Activated T-helper 2 cell treated with anti-CD3 and anti-CD28 coated beads, Interferon-gamma antibody, Interleukin-2, Interleukin-4, amounts not matched to agents 10 μg/mL and 5 μg/mL and 100 μg/mL, durations not matched to agents 14 hours and 24 hours and 36 hours (primary cell): ENCODE measurements at regions of chr14 and their contacts with region 1.

Region 1: DNA sequence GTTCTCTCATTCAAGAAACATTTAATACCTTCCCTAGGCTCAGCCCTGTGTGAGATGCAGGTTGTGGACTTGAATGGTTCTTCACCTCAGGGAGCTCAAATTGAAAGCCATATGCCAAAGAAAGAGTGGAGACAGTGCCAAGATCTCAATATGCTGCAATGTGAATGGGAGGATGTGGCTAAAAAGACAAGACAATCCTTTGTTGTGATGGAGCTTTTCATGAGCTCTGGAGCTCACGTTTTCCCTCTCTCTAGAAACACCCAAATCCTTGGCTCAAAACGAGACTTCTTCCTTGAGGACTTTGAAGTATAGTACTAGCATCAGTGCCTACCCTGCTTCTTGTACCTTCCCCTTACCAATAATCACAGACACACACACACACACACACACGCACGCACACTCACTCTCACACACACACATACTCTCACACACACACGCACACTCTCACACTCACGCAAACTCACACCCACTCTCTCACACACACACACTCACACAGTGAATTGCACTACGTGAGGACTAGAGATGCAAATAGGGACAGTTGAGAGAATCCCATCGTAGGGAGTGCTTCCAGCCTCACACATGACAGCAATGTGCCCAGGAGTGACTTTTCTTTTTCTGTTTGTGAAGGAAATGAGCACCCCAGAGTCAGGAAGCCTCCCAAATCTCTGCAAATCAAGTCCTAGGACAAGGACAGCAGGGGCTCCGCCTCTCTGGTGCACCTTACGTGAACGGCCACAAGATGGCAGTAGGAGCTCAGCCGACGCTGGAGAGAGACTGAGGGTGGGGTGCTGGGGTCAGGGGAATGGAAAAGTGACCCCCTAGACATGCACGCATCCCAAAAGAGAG is 231.4 kb downstream of the PCNX1 start:
- DNase-seq: peak; percentile 48
- H3K4me3 Mint-ChIP-seq: no peak overlapping the region
- H3K27ac Mint-ChIP-seq: no peak overlapping the region
- H3K4me1 Mint-ChIP-seq: peaks cover 48% of the 10 kb centered on the region
- H3K27me3 Mint-ChIP-seq: no peaks in the 10 kb centered on the region

Region 2: GRCh38 chr14:71031000-71031399 is 107.7 kb before region 1 on chr14:
- intact Hi-C with region 1: no loop called
- DNase-seq: no peak
- H3K4me3 Mint-ChIP-seq: no peak overlapping the region
- H3K27ac Mint-ChIP-seq: no peak overlapping the region
- H3K4me1 Mint-ChIP-seq: no peaks in the 10 kb centered on the region
- H3K27me3 Mint-ChIP-seq: no peaks in the 10 kb centered on the region

Region 3: DNA sequence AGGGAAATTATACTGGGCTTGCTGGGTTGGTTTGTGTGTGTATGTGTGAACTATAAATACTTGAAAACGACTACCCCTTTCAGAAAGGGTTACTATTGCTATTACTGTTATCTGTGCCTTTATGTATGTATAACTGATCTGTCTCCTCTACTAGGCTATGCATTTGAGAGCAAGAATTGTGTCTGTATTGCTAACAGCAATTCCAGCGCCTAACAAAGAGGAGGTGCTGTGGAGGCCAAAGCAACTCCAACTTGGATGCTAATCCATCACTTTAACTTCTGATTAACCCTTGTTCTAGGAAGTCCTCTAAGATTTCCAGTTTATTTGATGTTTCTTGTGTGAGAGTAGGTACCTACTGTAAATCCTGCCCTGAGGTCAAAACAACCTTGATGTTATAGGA is 82.4 kb after region 1 on chr14:
- intact Hi-C with region 1: loop called (anchors 1 kb)
- DNase-seq: no peak
- H3K4me3 Mint-ChIP-seq: no peak overlapping the region
- H3K27ac Mint-ChIP-seq: no peak overlapping the region
- H3K4me1 Mint-ChIP-seq: peaks cover 24% of the 10 kb centered on the region
- H3K27me3 Mint-ChIP-seq: no peaks in the 10 kb centered on the region

Region 4: DNA sequence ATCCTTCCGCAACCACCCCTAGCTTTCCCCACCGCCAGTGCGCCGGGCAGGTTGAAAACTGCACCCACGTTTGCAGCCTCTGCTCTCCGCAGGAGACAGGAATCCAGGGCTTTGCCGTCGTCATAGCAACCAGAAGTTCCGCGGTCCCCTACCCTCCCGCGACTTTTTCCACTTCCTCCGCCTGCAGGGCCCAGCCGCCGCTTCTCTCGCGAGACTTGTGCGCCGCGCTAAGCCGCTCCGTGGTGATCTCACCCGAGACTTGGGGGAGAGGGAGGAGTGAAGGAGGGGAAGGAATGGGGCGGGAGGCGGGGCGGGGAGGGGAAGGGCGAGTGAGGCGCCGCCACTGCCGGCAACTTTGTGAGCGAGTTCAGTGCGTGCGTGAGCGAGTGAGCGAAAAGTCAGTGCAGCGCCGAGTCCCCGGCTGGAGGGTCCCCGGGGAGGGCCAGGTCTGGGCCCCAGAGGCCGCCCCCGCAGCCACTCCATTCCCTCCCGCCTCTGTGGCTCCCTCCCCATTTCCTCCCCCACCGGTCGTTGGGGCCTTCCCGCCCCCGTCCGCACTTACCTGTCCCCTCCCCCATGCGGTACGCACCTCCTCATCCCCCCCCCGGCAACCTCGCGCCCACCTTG is 181.5 kb after region 1 on chr14:
- intact Hi-C with region 1: loop called (anchors 1 kb)
- DNase-seq: peak; percentile 99
- H3K4me3 Mint-ChIP-seq: peak within 1 kb of the TSS; percentile 92
- H3K27ac Mint-ChIP-seq: peak within 1 kb of the TSS; percentile 91
- H3K4me1 Mint-ChIP-seq: peaks cover 42% of the 10 kb centered on the region
- H3K27me3 Mint-ChIP-seq: no peaks in the 10 kb centered on the region

Region 5: DNA sequence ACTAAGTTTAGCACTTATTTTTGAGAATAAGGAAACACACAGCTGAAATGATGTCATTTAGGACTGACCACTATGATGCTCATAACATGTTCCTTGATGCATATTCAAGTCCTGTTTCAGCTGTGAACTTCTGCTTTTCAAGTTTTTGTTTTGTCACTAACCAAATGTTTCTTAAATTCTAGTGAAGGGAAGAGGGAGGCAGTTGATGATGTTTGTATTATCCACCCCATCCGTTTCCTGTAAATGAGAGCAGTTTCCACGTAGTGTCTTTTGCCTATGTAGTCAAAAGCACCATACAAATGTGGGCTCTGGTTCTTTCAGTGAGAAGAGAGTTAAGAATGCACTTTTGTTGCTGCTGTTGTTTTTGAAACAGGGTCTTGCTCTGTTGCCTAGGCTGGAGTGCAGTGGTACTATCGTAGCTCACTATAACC is 260.4 kb after region 1 on chr14:
- intact Hi-C with region 1: loop called (anchors 1 kb)
- DNase-seq: no peak
- H3K4me3 Mint-ChIP-seq: peak overlapping the region; percentile 37
- H3K27ac Mint-ChIP-seq: peak overlapping the region; percentile 92
- H3K4me1 Mint-ChIP-seq: peaks cover 54% of the 10 kb centered on the region
- H3K27me3 Mint-ChIP-seq: no peaks in the 10 kb centered on the region

Region 6: GRCh38 chr14:71478542-71478941 is 339.9 kb after region 1 on chr14:
- intact Hi-C with region 1: loop called (anchors 5 kb)
- DNase-seq: no peak
- H3K4me3 Mint-ChIP-seq: no peak overlapping the region
- H3K27ac Mint-ChIP-seq: peak overlapping the region; percentile 14
- H3K4me1 Mint-ChIP-seq: peaks cover 48% of the 10 kb centered on the region
- H3K27me3 Mint-ChIP-seq: no peaks in the 10 kb centered on the region

Region 7: DNA sequence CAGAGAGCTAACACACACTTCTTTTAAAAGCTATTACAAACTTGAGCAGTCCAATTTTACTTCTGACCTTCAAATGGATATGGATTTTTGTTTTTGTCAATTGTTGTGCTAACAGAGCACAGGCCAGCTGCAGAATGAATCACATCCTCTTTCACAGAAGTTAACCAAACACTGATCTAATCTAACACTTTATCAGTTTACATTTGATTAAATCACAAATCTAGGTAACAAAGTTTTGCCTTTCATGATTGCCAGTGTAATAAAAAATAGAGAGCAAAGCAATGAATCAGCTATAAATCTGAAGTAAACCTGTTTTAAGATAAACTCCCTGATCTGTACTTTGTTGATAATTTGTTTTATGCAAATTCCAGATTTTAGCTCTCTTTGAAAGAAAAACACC is 520.5 kb after region 1 on chr14:
- intact Hi-C with region 1: loop called (anchors 1 kb)
- DNase-seq: no peak
- H3K4me3 Mint-ChIP-seq: no peak overlapping the region
- H3K27ac Mint-ChIP-seq: peak overlapping the region; percentile 9
- H3K4me1 Mint-ChIP-seq: peaks cover 33% of the 10 kb centered on the region
- H3K27me3 Mint-ChIP-seq: no peaks in the 10 kb centered on the region

Region 8: DNA sequence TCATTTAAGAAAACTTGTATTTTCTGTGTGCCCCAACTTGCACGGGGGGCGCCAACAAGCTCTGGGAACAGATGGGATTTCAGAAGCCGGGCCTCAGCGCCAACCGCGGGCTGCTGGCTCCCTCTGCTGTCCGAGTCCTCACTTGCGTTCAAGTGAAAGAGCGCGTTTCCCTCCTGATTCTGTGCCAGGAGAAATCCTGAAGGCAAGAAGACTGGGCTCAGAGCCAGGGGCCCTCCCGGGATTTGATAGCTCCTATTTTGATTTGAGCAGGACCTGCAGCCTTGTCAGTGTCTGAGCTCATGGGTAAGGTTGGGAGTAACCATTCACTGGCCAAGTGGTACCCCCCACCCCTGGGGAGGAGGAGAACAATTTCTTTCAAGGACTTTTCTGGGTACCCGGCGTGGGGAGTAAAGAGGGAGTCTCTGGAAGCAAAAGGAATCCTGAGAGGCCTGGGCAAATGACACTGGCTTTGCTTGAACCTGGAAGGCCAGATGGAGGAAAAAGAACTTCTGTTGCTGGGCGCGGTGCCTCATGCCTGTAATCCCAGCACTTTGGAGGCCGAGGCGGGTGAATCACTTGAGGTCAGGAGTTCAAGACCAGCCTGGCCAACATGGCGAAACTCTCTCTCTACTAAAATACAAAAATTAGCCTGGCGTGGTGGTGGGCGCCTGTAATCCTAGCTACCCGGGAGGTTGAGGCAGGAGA is 614.6 kb after region 1 on chr14:
- intact Hi-C with region 1: loop called (anchors 1 kb)
- DNase-seq: peak; percentile 55
- H3K4me3 Mint-ChIP-seq: peak overlapping the region; percentile 26
- H3K27ac Mint-ChIP-seq: no peak overlapping the region
- H3K4me1 Mint-ChIP-seq: peaks cover 18% of the 10 kb centered on the region
- H3K27me3 Mint-ChIP-seq: peaks cover 2% of the 10 kb centered on the region